ENCODE measurements at regions of chr22 and their contacts with region 1.

Region 1: DNA sequence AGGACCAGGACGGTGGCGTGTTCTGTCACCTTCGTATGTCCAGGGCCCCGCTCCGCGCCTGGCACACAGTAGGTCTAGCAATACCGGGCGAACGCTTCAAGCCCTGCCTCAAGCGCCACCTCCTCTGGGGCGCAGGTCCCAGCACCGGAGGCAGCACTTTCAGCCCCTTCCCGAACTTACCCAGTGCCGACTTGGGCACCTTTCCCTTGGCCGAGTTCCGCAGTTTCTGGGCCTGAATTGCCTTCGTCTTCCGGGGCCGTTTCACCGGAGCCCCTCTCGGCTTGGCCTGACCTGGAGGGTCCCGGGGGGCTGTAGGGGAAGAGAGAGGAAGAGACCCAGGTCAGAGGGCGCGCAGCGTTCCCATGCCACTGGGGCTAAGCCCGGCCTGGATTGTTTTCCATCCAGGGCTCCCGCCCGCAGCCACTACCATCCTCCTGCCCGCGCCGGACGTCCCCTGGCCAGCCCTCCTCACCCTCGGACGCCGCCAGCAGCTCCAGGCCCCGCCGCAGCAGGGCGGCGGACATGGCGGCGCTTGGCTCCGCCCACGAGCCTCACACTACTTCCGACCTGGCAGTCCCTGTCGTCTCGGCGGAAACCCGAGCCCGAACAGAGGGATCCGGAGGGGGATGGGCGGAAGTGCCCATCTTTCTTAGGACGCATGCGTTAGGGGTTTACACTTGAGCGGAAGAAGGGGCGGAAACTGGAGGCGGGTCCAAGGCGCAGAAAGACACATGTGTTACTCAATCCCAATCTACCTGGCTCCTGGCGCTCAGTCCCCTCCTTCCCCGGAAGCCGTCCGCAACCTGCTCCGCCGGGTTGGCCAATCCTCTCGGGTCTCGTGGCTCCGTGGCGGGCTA is at the start of gene RPS19BP1:
- DNase-seq: peak; percentile 93 to 100 (median 98)

Region 2: DNA sequence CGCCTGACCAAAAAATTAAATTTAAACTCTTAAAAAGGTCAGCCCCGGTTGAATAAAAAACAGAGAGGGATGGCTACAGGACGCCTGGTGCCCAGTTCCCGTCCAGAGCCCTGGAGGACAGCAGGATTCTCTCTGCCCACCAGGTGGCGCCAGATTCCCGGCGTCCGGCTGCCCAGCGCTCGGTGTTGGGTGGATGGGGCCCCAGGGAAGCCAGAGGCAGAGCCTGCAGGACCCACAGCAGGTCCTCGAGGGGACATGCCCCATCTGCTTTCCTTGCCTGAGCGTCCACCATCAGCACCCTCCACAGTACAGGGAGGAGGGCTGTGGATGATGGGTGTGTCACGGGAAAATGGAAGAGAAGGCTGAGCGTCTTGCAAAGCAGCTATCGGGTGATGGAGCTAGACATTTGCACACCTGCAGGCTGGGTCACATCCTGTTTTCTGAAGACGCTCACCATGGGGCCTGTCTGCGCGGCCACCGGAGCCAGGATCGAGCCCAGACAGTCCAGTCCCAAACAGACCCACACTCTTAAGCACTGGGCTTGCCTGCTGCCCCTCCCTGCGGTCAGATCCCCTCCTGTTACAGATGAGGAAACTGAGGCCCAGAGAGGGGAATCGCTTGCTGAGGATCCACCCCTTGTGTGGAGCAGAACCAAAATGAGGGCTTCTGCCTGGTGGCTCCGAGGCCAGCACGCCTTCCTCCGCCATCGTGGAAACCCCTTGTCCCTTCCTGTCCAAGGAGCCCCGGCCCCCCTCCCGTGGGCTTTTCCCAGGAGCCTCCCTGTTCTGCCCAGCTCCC is 361.4 kb before region 1 on chr22:
- intact Hi-C with region 1: loop called (anchors 5 kb)
- DNase-seq: peak; percentile 64 to 96 (median 89)

Region 3: DNA sequence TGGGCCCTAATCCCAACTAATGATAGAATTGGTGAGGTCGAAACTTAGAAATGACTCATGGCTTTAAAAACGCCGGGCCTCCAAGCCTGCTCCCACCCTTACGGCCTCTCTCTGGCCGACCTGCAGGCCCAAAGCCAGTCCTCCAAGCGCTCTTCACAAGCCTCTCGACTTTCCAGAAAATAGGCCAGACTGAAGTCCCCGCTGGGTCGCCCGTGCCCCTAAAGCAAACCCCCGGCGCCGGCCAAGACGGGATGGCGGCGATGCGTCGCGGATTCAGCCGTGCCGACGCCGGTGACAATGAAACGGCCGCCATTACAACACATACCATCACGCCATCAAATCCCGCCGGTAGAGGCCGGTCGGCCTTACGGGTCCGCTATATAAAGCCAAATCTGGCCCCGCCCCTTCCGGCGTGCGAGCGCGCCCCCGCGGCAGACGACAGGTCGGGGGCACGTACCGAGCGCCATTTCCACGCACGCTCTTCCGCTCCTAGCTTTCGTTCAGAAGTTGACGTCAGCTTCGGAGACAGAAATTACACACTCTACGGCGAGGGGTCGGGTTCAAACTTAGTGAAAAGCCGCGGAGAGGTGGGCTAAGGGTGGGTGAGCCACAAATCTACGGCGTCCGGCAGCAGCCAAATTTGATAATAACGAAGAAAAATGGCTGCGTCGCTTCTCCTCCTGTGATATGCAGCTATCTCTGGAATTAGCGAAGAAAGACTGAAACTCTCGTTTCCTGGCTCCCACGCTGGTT is 213.0 kb before region 1 on chr22 and contains the start of gene RPL3:
- intact Hi-C with region 1: loop called (anchors 5 kb)
- DNase-seq: peak; percentile 92 to 99 (median 97)

Region 4: GRCh38 chr22:39400970-39401631 is 131.3 kb before region 1 on chr22:
- intact Hi-C with region 1: loop called (anchors 5 kb)
- DNase-seq: no peak

Region 5: DNA sequence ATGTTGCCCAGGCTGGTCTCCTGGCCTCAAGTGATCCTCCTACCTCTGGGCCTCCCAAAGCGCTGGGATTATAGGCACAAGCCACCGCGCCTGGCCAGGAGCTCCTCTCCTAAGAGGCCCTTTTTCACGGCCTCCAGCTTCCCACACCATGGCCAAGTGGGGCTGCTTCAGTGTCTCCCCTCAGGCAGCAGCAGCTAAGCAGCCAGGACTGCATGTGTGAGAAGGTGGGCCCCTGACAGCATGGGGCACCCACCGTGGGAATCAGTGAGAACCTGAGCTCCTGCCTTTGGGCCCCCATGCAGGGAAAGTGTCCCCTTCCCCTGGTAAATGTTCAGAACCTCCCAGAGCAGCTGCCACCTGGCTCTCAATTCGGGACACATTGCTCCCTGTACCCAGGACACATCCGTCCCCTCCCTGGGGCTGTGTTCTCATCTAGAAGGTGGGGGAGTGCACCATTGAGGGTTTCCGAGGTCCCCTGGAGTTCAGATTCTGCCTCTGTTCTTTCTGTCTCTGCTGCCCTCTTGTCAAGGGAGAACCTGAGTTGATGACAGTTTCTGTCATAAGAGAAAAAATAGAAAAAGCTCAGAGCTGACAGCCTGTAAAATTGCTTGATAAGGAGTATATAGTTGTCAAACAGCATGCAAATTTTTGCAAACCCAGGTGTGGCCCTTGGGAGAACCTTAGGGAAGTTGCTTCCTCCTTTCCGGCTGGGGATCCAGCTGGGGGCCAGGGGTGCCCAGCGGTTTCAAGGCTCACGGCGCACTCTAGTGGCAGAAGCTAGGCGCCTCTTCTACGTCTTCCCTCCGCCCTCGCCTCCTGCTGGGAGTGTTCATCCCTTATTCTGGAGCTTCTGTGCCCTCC is 492.0 kb after region 1 on chr22:
- intact Hi-C with region 1: loop called (anchors 5 kb)
- DNase-seq: peak; percentile 60 to 92 (median 79)

Region 6: DNA sequence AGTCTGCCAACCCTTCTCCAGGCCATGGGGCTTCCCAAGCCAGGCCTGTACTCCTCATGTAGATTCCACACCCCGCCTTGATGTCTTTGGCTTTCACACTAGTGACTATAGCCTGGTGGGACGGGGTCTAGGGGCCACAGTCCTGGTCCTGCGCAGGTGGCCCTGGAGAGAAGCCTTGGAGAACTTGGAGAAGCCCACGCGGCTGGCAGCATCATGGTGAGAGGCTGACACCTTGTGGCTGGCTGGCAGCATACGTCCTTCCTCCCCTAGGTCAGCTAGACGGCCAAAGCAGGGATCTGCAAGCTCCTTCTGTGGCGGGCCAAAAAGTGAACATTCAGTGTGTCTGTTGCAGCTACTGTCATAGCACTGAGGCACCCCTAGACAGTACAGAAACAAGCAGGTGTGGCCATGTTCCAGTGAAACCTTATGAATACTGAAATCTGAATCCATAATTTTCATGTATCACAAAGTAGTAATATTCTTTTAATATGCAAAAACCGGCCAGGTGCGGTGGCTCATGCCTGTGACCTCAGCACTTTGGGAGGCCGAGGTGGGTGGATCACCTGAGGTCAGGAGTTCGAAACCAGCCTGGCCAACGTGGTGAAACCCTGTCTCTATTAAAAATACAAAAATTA is 504.3 kb after region 1 on chr22:
- intact Hi-C with region 1: loop called (anchors 5 kb)
- DNase-seq: peak; percentile 45 to 88 (median 72)

Region 7: DNA sequence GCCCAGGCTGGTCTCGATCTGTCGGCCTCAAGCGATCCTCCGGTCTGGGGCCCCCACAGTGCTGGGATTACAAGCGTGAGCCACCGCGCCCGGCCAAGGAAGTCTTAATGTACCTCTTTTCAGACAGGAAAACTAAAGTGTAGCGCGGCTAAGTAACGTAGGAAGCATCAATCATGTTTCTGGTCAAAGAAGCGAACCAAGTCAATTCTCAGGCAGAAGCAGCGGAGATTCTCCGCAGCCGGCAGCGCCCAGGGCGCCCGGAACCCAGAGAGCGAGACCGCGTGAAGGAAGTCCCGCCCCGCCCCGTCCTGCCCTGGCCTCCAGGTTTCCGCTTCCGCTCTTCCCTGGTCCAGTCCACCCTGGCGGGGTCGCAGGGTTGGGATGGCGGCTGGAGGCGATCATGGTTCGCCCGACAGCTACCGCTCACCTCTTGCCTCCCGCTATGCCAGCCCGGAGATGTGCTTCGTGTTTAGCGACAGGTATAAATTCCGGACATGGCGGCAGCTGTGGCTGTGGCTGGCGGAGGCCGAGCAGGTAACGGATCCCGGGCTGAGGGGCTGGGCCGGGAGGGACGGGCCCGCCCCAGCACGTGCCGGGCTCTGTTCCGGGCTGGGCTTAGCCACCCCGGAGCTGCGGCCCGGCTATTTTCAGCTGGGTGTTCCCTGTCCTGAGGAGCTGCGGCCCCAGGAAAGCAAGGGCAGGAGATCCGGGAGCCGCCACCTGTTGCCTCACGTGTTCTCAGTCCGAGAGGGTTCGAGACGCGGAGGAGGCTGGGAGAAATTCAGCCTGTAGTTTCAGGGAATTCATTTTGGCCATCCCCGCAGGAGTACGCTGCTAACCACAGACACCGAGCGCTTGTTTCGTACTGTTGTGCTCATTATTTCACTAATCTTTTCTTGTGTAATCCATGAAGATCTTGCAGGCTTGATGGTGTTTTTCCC is 814.0 kb after region 1 on chr22 and contains the start of gene ADSL:
- intact Hi-C with region 1: loop called (anchors 5 kb)
- DNase-seq: peak; percentile 73 to 96 (median 90)

Measured in head of caudate nucleus (tissue), 42 donors.